ENCODE measurements at regions of chr17 and their contacts with region 1.

Region 1: DNA sequence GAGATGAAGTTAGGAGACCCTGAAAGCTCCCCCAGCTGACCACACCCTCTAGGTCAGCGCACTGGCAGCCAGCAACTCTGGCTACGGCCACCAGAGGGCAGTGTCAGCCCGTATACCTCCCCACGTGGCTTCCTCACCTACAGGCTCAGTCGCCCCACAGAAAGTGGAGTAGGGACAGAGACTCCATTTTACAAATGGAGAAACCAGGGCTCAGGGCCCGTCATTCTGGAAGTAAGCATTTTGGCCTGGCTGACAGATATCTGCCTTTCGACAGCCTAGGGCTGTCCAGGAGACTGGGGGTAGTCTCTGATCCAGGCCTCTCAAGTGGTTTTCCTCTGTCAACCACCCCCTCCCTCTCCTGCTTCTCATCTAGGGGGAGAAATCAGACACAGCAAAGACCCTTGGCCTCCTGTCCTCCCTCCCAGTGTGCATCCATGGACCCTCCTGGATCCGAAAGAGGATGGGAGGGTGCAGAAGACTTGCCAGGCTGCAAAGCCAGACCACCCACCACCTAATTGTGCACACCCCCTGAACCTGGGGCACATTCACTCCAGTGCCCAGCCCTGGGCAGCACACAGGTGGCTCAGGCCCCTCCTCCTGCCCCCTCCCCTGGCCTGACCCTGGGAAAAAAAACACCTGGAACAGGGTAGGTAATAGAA is 3.8 kb upstream of the HAP1 start:
- DNase-seq: peak; percentile 77
- ATAC-seq: peak; percentile 96
- H3K4me3 Mint-ChIP-seq: no peak overlapping the region
- H3K27ac Mint-ChIP-seq: no peak overlapping the region
- H3K4me1 Mint-ChIP-seq: peaks cover 11% of the 10 kb centered on the region
- H3K27me3 Mint-ChIP-seq: peaks cover 22% of the 10 kb centered on the region
- CTCF ChIP-seq: peak; percentile 94

Region 2: GRCh38 chr17:41750862-41751261 is 12.7 kb after region 1 on chr17:
- CTCF ChIA-PET with region 1: no interaction called
- POLR2A ChIA-PET with region 1: no interaction called
- intact Hi-C with region 1: no loop called
- DNase-seq: no peak
- ATAC-seq: no peak
- H3K4me3 Mint-ChIP-seq: no peak overlapping the region
- H3K27ac Mint-ChIP-seq: no peak overlapping the region
- H3K4me1 Mint-ChIP-seq: no peaks in the 10 kb centered on the region
- H3K27me3 Mint-ChIP-seq: peaks cover 5% of the 10 kb centered on the region
- CTCF ChIP-seq: no peak

Region 3: GRCh38 chr17:41786227-41787020 is 48.2 kb after region 1 on chr17 and contains the start of gene JUP:
- CTCF ChIA-PET with region 1: interaction called, 7 read pairs
- POLR2A ChIA-PET with region 1: interaction called, 4 read pairs
- intact Hi-C with region 1: loop called (anchors 1 kb)
- DNase-seq: peak; percentile 98
- ATAC-seq: peak; percentile 94
- H3K4me3 Mint-ChIP-seq: peak within 1 kb of the TSS; percentile 78
- H3K27ac Mint-ChIP-seq: peak within 1 kb of the TSS; percentile 75
- H3K4me1 Mint-ChIP-seq: peaks cover 57% of the 10 kb centered on the region
- H3K27me3 Mint-ChIP-seq: no peaks in the 10 kb centered on the region
- CTCF ChIP-seq: no peak
- total RNA-seq, gene JUP: 27.3 and 31.1 TPM in 2 replicates

Region 4: GRCh38 chr17:41801374-41802271 is 63.4 kb after region 1 on chr17:
- CTCF ChIA-PET with region 1: interaction called, 54 read pairs
- POLR2A ChIA-PET with region 1: interaction called, 3 read pairs
- intact Hi-C with region 1: loop called (anchors 1 kb)
- DNase-seq: peak; percentile 68
- ATAC-seq: peak; percentile 87
- H3K4me3 Mint-ChIP-seq: no peak overlapping the region
- H3K27ac Mint-ChIP-seq: no peak overlapping the region
- H3K4me1 Mint-ChIP-seq: peaks cover 17% of the 10 kb centered on the region
- H3K27me3 Mint-ChIP-seq: no peaks in the 10 kb centered on the region
- CTCF ChIP-seq: peak; percentile 77

Region 5: DNA sequence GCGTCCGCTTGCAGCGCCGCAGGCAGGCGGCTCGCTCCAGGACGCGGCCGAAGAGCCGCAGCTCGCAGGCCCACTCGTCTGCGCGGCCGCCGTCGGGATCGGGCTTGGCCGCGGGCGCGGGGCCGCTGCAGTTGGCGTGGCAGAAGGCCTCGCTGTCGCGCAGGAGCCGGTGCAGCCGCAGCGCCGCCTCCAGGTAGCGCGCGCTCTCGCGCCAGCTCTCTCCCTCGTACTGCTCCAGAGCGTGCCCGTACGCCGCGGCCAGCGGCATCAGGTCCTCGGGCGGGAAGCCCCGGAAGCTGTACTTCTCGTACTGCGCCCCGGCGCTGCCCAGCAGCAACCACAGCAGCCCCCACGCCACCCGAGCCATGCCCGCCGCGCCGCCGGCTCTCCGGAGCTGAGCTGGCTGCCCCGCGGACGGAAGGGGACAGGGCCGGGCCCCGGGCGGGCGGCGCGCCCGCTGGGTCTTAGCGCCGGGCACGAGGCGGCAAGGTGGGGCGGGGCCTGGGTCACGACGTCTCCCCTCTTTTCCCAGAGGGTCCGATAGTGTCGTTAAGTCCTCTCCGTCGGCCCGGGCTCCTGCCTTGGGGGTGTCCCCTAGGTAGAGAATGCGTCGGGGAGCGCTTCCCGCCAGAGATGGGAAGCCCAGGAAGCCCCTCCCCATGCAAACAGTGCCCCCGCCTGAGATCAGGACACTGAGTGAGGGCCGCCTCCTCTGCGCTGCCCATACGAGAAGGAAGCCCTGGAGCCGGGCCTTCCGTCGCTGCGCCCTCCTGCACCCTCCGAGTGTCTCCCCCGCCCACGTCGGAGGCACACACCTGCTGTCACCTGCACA is 73.6 kb after region 1 on chr17 and contains the start of gene P3H4:
- CTCF ChIA-PET with region 1: interaction called, 12 read pairs
- POLR2A ChIA-PET with region 1: no interaction called
- intact Hi-C with region 1: loop called (anchors 2 kb)
- DNase-seq: peak; percentile 79
- ATAC-seq: peak; percentile 94
- H3K4me3 Mint-ChIP-seq: peak within 1 kb of the TSS; percentile 87
- H3K27ac Mint-ChIP-seq: peak within 1 kb of the TSS; percentile 66
- H3K4me1 Mint-ChIP-seq: peaks cover 15% of the 10 kb centered on the region
- H3K27me3 Mint-ChIP-seq: peaks cover 9% of the 10 kb centered on the region
- CTCF ChIP-seq: no peak
- total RNA-seq, gene P3H4: 0.76 and 1.9 TPM in 2 replicates

Region 6: DNA sequence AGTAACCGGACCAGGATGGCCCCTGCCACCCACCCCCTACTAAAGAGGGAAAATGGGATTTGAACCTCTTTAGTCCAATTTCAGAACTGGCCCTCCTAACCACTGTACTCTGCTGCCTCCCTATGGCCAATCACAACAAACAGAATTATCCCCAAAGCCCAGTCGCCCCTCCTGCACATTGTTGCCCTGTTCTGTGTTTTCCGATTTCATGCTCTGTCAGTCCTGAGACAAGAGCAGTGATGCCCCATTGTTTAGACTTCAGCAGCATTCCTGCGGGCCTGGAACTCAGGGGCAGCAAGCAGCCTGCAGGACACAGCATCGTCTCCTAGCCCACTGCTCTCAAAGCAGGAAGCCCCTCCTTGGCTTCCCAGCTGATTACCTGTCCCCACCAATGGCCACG is 147.5 kb after region 1 on chr17:
- CTCF ChIA-PET with region 1: no interaction called
- POLR2A ChIA-PET with region 1: no interaction called
- intact Hi-C with region 1: loop called (anchors 1 kb)
- DNase-seq: no peak
- ATAC-seq: no peak
- H3K4me3 Mint-ChIP-seq: no peak overlapping the region
- H3K27ac Mint-ChIP-seq: no peak overlapping the region
- H3K4me1 Mint-ChIP-seq: no peaks in the 10 kb centered on the region
- H3K27me3 Mint-ChIP-seq: no peaks in the 10 kb centered on the region
- CTCF ChIP-seq: no peak